Activated T-helper 1 cell treated with anti-CD3 and anti-CD28 coated beads, Interleukin-12 subunit alpha, Interleukin-12 subunit beta, Interleukin-2, Interleukin-4 antibody, amounts not matched to agents 30 ng/mL and 10 ng/mL and 1 ng/mL, durations not matched to agents 14 hours and 24 hours and 36 hours (primary cell): ENCODE measurements at regions of chr19 and their contacts with region 1.

Region 1: DNA sequence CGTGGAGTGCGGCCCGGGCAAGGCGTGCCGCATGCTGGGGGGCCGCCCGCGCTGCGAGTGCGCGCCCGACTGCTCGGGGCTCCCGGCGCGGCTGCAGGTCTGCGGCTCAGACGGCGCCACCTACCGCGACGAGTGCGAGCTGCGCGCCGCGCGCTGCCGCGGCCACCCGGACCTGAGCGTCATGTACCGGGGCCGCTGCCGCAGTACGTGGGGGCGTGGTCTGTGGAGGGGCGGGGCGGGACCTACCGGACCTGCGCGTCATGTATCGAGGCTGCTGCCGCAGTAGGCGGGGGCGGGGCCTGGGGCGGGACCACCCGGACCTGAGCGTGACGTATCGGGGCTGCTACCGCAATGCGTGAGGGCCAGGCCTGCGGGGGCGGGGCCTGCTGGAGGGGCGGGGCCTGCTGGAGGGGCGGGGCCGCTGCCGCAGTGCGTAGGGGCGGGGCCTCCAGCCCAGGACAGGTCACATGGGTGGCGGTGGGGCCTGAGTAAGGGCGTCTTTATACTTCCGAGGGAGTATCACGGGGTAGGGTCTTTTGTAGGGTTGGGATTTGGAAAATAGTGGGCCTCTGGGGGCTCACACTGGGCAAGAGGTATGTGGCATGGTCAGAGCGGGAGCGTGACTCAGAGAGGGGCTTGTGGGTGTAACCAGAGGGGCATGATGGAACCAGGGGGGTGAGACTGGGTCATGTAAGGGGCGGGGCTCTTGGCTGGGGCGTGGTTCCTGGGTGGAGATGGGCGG is 4.3 kb downstream of the FSTL3 start:
- DNase-seq: peak; percentile 95
- H3K4me3 Mint-ChIP-seq: peak overlapping the region; percentile 86
- H3K27ac Mint-ChIP-seq: peak overlapping the region; percentile 99
- H3K4me1 Mint-ChIP-seq: no peaks in the 10 kb centered on the region
- H3K27me3 Mint-ChIP-seq: peaks cover 5% of the 10 kb centered on the region

Region 2: GRCh38 chr19:306151-306900 is 374.1 kb before region 1 on chr19:
- intact Hi-C with region 1: no loop called
- DNase-seq: no peak
- H3K4me3 Mint-ChIP-seq: no peak overlapping the region
- H3K27ac Mint-ChIP-seq: no peak overlapping the region
- H3K4me1 Mint-ChIP-seq: no peaks in the 10 kb centered on the region
- H3K27me3 Mint-ChIP-seq: no peaks in the 10 kb centered on the region

Region 3: GRCh38 chr19:531009-531752 is 149.3 kb before region 1 on chr19:
- intact Hi-C with region 1: loop called (anchors 1 kb)
- DNase-seq: peak; percentile 91
- H3K4me3 Mint-ChIP-seq: peak overlapping the region; percentile 83
- H3K27ac Mint-ChIP-seq: peak overlapping the region; percentile 81
- H3K4me1 Mint-ChIP-seq: peaks cover 9% of the 10 kb centered on the region
- H3K27me3 Mint-ChIP-seq: no peaks in the 10 kb centered on the region

Region 4: GRCh38 chr19:633068-633785 is 47.2 kb before region 1 on chr19 and contains the start of gene POLRMT:
- intact Hi-C with region 1: loop called (anchors 1 kb)
- DNase-seq: peak; percentile 96
- H3K4me3 Mint-ChIP-seq: peak within 1 kb of the TSS; percentile 96
- H3K27ac Mint-ChIP-seq: peak within 1 kb of the TSS; percentile 95
- H3K4me1 Mint-ChIP-seq: peaks cover 6% of the 10 kb centered on the region
- H3K27me3 Mint-ChIP-seq: no peaks in the 10 kb centered on the region
- total RNA-seq, gene POLRMT: 103 and 104 TPM in 2 replicates

Region 5: DNA sequence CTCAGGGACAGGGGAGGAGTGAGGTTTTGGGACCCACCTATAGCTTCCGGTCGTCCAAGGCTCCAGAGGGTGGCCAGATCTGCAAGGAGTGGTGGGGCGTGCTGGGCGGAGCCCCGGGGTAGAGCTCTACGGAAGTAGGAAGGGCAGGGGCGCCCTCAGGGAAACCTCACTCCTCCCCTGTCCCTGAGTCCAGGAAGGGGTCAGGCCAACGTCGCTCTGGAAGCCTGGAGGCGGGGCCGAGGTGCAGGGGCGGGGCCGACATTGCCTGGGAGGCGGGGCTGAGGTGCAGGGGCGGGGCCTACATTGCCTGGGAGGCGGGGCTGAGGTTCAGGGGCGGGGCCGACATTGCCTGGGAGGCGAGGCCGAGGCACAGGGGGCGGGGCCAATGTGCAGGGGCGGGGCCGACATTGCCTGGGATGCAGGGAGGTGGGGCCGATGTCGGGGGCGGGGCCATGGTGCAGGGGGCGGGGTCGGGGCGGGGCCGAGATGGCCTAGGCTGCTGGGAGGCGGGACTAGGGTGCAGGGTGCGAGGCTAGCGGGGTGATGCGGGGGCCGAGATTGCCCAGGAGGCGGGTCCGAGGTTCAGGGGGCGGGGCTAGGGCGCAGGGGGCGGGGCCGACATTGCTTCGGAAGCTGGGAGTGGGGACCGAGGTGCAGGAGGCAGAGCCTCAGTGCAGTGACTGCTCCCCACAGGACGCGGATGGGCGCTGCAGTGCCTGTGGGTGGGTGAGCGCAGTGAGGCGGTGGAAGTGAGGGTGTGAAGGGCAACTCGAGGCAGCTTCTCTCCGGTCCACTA is 23.4 kb after region 1 on chr19:
- intact Hi-C with region 1: loop called (anchors 1 kb)
- DNase-seq: peak; percentile 45
- H3K4me3 Mint-ChIP-seq: no peak overlapping the region
- H3K27ac Mint-ChIP-seq: no peak overlapping the region
- H3K4me1 Mint-ChIP-seq: no peaks in the 10 kb centered on the region
- H3K27me3 Mint-ChIP-seq: peaks cover 28% of the 10 kb centered on the region

Region 6: GRCh38 chr19:718991-719512 is 38.6 kb after region 1 on chr19:
- intact Hi-C with region 1: no loop called
- DNase-seq: no peak
- H3K4me3 Mint-ChIP-seq: no peak overlapping the region
- H3K27ac Mint-ChIP-seq: no peak overlapping the region
- H3K4me1 Mint-ChIP-seq: no peaks in the 10 kb centered on the region
- H3K27me3 Mint-ChIP-seq: peaks cover 11% of the 10 kb centered on the region

Region 7: GRCh38 chr19:752652-753517 is 72.4 kb after region 1 on chr19:
- intact Hi-C with region 1: no loop called
- DNase-seq: no peak
- H3K4me3 Mint-ChIP-seq: no peak overlapping the region
- H3K27ac Mint-ChIP-seq: no peak overlapping the region
- H3K4me1 Mint-ChIP-seq: no peaks in the 10 kb centered on the region
- H3K27me3 Mint-ChIP-seq: no peaks in the 10 kb centered on the region

Region 8: GRCh38 chr19:1249298-1249989 is 569.0 kb after region 1 on chr19:
- intact Hi-C with region 1: loop called (anchors 10 kb)
- DNase-seq: peak; percentile 91
- H3K4me3 Mint-ChIP-seq: peak overlapping the region; percentile 82
- H3K27ac Mint-ChIP-seq: peak overlapping the region; percentile 86
- H3K4me1 Mint-ChIP-seq: peaks cover 5% of the 10 kb centered on the region
- H3K27me3 Mint-ChIP-seq: no peaks in the 10 kb centered on the region